Heart right ventricle (tissue), 16 donors: ENCODE measurements at regions of chr2 and their contacts with region 1.

Region 1: DNA sequence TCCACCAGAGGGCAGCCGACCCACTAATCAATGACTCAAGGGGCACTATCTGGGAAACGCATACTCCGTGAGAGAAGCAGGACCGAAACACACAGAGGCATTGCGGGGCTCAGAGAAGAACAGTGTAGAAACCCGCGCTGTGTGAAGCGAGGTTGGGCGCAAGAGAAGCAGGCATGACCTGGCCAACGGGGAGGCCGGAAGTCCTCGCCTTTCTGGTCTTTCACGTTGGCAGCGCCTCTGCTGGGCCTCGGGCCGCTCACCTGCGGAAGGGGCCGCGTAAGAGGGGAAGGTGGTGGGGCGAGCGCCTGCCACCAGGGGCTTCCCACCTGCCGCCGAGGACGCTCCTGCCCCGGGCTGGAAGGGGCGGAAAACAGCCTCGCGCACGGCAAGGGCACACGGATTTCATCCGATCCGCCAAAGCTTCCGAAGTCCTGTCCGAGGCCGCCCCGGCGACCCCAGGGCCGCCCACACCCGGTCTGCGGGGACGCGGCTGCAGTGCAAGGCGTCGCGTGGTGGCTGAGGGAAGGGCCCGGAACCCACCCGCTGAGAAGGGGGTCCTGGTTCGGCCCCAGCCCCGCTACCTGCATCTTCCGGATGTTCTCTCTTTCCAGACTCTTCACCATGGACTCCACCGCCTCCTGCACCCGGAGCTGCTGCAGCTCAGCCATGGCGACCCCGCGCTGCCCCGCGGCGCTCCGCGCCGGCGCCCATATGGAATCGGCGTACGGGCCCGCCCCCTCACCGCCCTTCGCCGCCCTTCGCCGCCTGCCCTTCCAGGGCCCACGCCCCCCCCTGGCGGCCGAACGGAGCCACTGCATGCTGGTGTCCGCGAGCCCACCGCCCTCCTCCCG is at the start of gene FAM136A:
- DNase-seq: peak; percentile 81 to 88
- ATAC-seq: peak; percentile 95 to 97 (median 96)
- H3K4me3 ChIP-seq: peak within 1 kb of the TSS; percentile 68 to 100 (median 98)
- H3K27ac ChIP-seq: peak within 1 kb of the TSS; percentile 33 to 94 (median 90)
- H3K4me1 ChIP-seq: peaks cover 0 to 15% (median 13%) of the 10 kb centered on the region in 9 donors
- H3K27me3 ChIP-seq: no peaks in the 10 kb centered on the region
- CTCF ChIP-seq: peak; percentile 95 to 99 (median 97)
- total RNA-seq, gene FAM136A: 17.6 to 26.9 (median 21.0) TPM

Region 2: DNA sequence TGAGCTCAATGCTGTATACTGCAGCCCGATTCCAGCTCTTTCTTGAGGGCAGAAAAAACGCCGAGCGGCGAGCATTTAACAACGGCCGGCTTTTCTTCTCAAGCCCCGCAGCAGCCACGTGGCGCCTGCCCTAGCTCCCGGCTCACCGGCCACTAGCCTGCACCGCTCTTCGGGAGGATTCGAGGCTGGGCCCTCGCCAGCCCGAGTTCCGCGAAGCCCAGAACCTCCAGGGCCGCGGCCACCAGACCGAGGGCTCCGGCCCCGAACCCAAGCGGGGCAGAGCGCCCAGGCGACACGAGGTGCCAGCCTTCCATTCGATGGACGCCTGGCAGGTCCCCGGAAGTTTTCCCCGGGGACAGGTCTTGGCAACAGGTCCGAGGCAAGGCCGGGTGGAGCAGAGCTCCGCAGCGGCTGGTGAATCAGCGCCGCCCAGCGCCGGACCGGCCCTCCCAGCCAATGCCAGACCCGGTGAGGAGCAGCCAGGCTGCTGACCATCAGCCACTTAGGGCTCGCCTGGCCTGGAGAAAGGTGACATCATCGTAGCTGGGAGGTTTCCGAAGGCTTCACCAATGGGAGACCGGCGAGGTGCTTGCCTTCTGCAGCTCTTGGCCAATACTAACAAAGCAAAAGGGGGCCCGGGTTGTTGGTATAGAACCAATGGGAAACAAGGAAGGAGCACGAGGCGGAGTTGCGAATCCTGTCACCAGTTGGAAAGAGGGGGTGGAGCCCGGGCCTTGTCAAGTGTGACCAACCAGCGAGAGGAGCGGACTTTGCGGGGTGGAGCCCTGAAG is 387.2 kb before region 1 on chr2:
- intact Hi-C with region 1: loop called in 7 of 10 experiments (anchors 1 to 10 kb)
- DNase-seq: peak; percentile 97 to 100
- ATAC-seq: peak; percentile 94 to 98 (median 96)
- H3K4me3 ChIP-seq: peak overlapping the region; percentile 45 to 95 (median 76)
- H3K27ac ChIP-seq: peak overlapping the region; percentile 80 to 97 (median 96)
- H3K4me1 ChIP-seq: peaks cover 0 to 59% (median 34%) of the 10 kb centered on the region in 9 donors
- H3K27me3 ChIP-seq: no peaks in the 10 kb centered on the region
- CTCF ChIP-seq: peak in 5 of 9 donors; percentile 29 to 53 (median 36)

Region 3: GRCh38 chr2:70190418-70191243 is 110.9 kb before region 1 on chr2 and contains the start of gene C2orf42:
- intact Hi-C with region 1: loop called in 1 of 10 experiments (anchors 10 kb)
- DNase-seq: peak; percentile 93 to 97
- ATAC-seq: peak; percentile 97 to 99 (median 98)
- H3K4me3 ChIP-seq: peak within 1 kb of the TSS; percentile 71 to 91 (median 76)
- H3K27ac ChIP-seq: peak within 1 kb of the TSS; percentile 83 to 95 (median 92)
- H3K4me1 ChIP-seq: peaks cover 0 to 15% (median 4%) of the 10 kb centered on the region in 9 donors
- H3K27me3 ChIP-seq: peaks cover 0 to 3% (median 0%) of the 10 kb centered on the region in 7 donors
- CTCF ChIP-seq: peak in 3 of 9 donors; percentile 17 to 32 (median 25)
- total RNA-seq, gene C2orf42: 7.3 to 15.5 (median 9.7) TPM

Region 4: DNA sequence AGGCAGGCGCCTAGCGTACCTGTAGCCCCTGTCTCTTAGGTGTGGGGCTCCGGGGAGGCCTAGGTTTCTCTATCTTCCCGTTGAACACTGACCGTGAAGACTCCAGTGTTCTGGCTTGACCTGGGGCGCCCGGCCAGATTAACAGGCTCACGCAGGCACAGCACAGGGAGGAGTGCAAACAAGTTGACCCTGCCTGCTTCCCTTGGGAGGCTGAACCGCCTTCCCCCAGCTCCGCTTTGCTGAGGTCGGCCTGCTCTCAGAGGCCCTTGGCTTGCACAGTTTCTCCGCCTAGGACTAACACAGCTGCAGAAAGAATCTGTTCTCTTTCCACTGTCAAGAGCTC is 43.1 kb before region 1 on chr2:
- intact Hi-C with region 1: no loop called
- DNase-seq: peak; percentile 84
- ATAC-seq: peak; percentile 60 to 81 (median 72)
- H3K4me3 ChIP-seq: peak overlapping the region; percentile 60 to 92 (median 89)
- H3K27ac ChIP-seq: peak overlapping the region; percentile 30 to 96 (median 86)
- H3K4me1 ChIP-seq: peaks cover 0 to 51% (median 40%) of the 10 kb centered on the region in 9 donors
- H3K27me3 ChIP-seq: no peaks in the 10 kb centered on the region
- CTCF ChIP-seq: no peak

Region 5: DNA sequence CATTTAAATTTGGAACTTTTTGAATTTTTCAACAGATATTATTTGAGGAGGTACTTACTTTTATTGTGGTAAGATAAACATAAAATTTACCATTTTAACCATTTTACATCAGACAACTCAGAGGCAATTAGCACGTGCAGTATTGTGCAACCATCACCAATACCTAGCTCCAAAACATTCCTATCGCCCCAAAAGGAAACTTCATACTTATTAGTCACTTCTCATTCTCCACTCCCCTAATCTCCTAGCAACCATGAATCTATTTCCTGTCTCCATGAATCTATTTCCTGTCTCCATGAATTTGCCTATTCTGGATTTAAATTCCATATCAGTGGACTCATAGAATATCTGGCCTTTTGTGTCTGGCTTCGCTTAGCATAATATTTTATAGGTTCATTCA is 70.2 kb after region 1 on chr2:
- intact Hi-C with region 1: no loop called
- DNase-seq: no peak
- ATAC-seq: no peak
- H3K4me3 ChIP-seq: no peak overlapping the region
- H3K27ac ChIP-seq: no peak overlapping the region
- H3K4me1 ChIP-seq: no peaks in the 10 kb centered on the region
- H3K27me3 ChIP-seq: no peaks in the 10 kb centered on the region
- CTCF ChIP-seq: no peak

Region 6: DNA sequence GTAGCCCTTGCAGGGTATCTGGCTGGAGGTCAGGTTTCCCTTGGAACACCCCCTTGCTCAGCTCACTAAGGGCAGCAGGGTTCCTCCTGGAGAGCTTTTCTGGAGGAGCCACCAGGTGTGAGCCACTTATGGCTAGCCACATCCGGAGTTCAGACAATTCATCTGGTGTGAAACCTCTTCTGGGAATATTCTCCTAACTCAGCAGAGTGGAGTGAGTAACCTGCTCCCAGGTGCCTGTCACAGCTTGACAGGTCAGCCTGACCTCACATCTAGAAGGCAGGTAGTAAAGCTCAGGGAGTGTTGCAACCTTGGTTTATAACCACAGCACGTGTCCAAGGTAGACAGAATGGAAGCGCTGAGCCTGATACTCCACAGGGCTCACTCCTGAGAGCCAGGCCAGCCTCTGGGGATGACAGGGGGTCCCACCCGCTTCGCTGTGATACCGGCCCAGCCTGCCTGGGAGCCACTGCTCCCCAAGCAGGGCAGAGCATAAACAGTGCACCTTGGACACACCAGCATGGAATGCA is 314.7 kb after region 1 on chr2:
- intact Hi-C with region 1: loop called in 3 of 10 experiments (anchors 1 to 2 kb)
- DNase-seq: no peak
- ATAC-seq: no peak
- H3K4me3 ChIP-seq: no peak overlapping the region
- H3K27ac ChIP-seq: no peak overlapping the region
- H3K4me1 ChIP-seq: no peaks in the 10 kb centered on the region
- H3K27me3 ChIP-seq: peaks cover 0 to 15% (median 0%) of the 10 kb centered on the region in 7 donors
- CTCF ChIP-seq: no peak

Region 7: DNA sequence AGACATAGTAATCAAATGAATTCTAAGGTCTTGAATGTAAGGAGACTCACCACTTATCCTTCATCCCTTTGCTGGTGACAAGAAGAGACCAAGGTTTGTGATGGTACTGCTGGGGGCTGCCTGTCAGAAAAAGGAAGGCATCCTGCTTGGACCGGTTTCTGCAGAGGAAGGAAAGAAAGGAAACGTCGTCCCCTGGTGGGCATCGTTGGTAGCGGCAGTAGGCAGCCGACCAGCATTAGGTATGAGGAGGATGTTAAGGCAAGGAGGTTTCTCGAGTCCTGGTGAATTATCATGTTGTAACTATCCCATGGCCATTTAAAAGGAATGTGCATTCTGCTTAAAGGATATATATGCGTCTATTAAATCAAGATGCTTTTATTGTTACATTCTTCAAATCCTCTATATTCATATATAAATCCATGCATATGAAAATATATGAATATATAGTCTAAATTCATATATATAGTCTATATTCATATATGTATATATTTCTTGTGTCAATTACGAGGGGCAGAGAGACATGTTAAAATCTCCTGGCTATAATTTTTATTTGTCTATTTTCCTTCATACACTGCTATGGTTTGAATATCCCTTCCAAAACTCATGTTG is 346.4 kb after region 1 on chr2:
- intact Hi-C with region 1: loop called in 5 of 10 experiments (anchors 1 to 10 kb)
- DNase-seq: peak; percentile 41 to 59
- ATAC-seq: peak in 5 of 8 donors; percentile 48 to 68 (median 57)
- H3K4me3 ChIP-seq: no peak overlapping the region
- H3K27ac ChIP-seq: no peak overlapping the region
- H3K4me1 ChIP-seq: no peaks in the 10 kb centered on the region
- H3K27me3 ChIP-seq: peaks cover 0 to 40% (median 8%) of the 10 kb centered on the region in 7 donors
- CTCF ChIP-seq: peak; percentile 66 to 96 (median 88)